Activated CD8-positive, alpha-beta T cell treated with anti-CD3 and anti-CD28 coated beads, Interleukin-2, amount 10 ng/mL, durations not matched to agents 7 days and 5 days (primary cell): ENCODE measurements at regions of chr9 and their contacts with region 1.

Region 1: GRCh38 chr9:124410321-124410913 is 4.8 kb downstream of the PSMB7 start:
- DNase-seq: no peak
- ATAC-seq: no peak
- H3K4me3 Mint-ChIP-seq: no peak overlapping the region
- H3K27ac Mint-ChIP-seq: no peak overlapping the region
- H3K4me1 Mint-ChIP-seq: peaks cover 33% of the 10 kb centered on the region
- H3K27me3 Mint-ChIP-seq: no peaks in the 10 kb centered on the region

Region 2: DNA sequence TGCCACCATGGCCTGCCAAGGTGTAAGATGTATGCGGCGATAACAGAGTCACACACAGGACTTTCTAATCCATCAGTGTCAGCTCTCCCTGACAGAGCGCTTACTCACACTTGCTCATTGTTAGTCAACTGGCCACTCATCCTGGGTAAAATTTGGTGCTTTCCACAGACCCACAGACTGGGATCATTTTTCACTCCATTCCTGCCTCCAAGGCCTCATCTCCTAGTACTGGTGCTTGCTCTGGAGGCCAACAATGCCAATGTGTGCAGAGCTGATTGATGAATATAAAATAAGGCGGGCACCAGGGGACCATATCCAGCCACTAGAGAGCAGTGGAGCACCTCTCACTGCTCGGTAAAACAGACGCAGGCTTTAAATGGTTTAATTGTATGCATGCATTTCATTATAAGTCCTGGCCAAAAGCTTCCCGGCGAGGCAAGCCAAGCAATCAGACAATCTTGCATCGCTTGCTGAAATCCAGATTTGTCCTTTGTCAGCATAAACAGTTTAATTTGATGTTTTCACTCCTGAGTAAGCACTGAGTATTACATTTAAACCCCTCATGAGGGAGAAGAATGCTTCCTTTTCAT is 17.5 kb before region 1 on chr9:
- CTCF ChIA-PET with region 1: interaction called, 19 read pairs
- POLR2A ChIA-PET with region 1: no interaction called
- DNase-seq: no peak
- ATAC-seq: no peak
- H3K4me3 Mint-ChIP-seq: no peak overlapping the region
- H3K27ac Mint-ChIP-seq: no peak overlapping the region
- H3K4me1 Mint-ChIP-seq: peaks cover 31% of the 10 kb centered on the region
- H3K27me3 Mint-ChIP-seq: no peaks in the 10 kb centered on the region

Region 3: DNA sequence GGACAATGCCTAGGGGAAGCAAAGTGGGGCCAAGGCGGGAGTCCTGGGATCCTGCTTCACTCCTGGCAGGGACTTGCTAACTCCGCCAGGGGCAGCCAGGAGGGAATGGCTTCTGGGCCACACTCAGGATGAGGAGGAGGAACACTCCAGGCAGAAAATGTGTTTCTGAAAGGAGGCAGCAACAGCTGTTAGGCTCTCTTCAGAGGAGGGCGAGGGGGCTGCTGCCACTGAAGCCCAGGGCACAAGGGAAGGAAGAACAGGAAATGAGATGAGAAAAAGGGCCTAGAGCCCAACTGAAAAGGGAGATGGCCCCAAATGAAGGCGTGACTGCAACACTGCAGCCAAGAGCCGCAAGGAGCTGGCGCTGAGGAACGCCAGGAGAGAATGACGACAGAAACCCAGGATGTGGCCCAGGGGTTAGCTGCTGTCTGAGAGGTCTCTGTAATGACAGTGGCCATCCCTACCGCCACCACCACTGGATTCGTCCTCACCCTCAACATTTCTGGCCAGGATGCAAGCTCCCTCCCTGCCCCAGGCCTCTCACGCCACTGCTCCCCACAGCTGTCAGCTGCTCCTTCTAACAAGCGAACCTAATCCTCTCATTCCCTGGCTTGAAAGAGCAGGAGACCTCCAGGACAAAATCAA is 11.0 kb before region 1 on chr9:
- CTCF ChIA-PET with region 1: interaction called, 19 read pairs
- POLR2A ChIA-PET with region 1: interaction called, 6 read pairs
- DNase-seq: no peak
- ATAC-seq: no peak
- H3K4me3 Mint-ChIP-seq: no peak overlapping the region
- H3K27ac Mint-ChIP-seq: no peak overlapping the region
- H3K4me1 Mint-ChIP-seq: peaks cover 27% of the 10 kb centered on the region
- H3K27me3 Mint-ChIP-seq: no peaks in the 10 kb centered on the region

Region 4: GRCh38 chr9:124428751-124429529 is 18.5 kb after region 1 on chr9:
- CTCF ChIA-PET with region 1: no interaction called
- POLR2A ChIA-PET with region 1: no interaction called
- DNase-seq: no peak
- ATAC-seq: no peak
- H3K4me3 Mint-ChIP-seq: no peak overlapping the region
- H3K27ac Mint-ChIP-seq: no peak overlapping the region
- H3K4me1 Mint-ChIP-seq: no peaks in the 10 kb centered on the region
- H3K27me3 Mint-ChIP-seq: peaks cover 1% of the 10 kb centered on the region